Common myeloid progenitor, CD34-positive (primary cell): ENCODE measurements at regions of chr17 and their contacts with region 1.

Region 1: GRCh38 chr17:21098934-21099689 is 27.7 kb upstream of the DHRS7B start:
- DNase-seq: peak; percentile 76 to 87 (median 85)
- H3K4me3 ChIP-seq: peak overlapping the region; percentile 40 to 95 (median 87)
- H3K27ac ChIP-seq: peak overlapping the region in 1 of 2 experiments; percentile 73
- H3K4me1 ChIP-seq: peaks cover 7 to 14% (median 10%) of the 10 kb centered on the region in 4 experiments
- H3K27me3 ChIP-seq: no peaks in the 10 kb centered on the region

Region 2: DNA sequence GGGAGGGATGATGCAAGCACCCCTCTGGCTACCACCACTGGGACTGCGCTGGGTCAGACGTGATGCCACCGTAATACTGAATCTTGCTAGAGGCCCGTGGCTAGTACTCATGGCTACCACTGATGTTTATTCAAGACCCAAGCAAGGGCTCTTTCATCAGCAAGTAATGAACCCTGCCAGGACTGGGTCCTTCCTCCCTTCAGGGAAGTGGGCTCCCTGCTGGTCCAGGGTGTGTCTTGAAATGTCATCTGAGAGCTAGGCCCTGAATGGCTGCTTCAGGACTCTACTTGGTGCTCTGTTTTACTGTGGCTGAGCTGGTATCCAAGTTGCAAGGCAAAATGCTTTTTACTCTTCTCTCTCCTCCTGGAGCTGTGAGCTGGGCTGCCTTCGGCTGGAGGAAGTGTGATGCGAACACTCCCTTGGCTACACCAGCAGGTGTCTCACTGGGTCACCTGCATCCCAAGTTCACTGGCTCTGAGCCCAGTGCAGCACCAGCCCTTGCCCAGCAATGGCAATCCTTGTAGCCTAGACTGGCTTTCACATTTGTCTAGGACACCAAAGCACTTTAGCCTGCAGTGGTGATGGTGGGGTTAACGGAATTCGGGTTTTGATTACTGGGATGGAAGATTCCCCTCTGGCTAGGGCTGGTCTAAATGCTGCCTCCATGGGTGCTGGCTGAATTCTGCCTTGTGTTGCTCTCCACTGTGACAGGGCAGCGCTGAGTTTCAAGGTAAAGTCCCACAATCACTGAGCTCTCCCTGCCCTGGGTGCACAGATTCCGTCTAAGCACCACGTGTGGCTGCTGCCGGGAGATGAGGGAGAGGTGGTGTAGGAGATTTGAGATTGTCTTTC is 154.9 kb before region 1 on chr17:
- CTCF ChIA-PET with region 1: no interaction called
- POLR2A ChIA-PET with region 1: no interaction called
- DNase-seq: peak; percentile 31 to 52 (median 46)
- H3K4me3 ChIP-seq: no peak overlapping the region
- H3K27ac ChIP-seq: no peak overlapping the region
- H3K4me1 ChIP-seq: peaks cover 0 to 3% (median 0%) of the 10 kb centered on the region in 4 experiments
- H3K27me3 ChIP-seq: no peaks in the 10 kb centered on the region

Region 3: DNA sequence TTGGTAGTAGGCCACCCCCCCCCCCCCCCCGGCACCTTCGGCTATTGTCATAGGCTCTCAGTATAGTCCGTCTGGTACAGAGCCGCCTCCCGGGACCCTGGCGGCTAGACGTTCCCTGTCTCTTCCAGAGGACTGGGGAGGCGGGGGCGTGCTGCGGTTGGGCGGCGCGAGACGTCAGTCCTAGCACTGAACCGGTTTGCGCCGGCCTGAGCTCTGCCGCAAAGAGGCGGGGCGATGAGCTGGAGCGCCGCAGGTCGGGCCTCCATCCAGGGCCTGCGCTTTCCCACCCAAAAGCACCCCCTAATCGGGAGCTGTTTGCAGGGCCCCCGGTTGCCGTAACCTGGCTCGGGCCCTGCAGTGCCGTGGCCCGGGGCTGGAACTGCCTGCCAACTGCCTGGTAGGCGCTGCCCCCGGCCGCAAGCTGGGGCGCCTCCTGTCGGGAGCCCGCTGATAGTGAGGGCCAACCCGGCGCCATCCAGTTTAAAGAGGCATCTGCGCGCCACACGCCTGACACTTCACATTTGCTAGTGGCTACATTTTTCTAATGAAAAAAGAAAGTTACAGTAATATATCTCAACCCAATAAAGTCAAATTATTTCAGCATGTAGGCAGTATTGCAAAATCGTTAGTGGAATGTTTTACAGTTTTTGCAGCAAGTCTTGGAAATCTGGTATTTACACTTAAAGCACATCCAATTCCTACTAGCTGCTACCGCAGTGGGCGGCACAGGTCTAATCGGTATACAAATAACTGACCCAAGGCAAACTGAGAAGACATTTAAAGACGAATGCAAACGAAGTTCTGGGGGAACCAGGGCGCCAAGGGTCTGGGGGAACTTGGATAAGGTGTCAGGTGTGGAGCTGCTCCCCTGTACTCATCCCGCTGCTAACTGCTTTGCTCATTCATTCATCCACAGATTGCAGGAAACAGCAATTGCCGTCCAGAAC is 55.6 kb before region 1 on chr17:
- CTCF ChIA-PET with region 1: interaction called, 5 read pairs
- POLR2A ChIA-PET with region 1: interaction called, 10 read pairs
- DNase-seq: peak; percentile 99 to 100 (median 99)
- H3K4me3 ChIP-seq: peak overlapping the region; percentile 9 to 75 (median 54)
- H3K27ac ChIP-seq: peak overlapping the region; percentile 50 to 81
- H3K4me1 ChIP-seq: peaks cover 11 to 33% (median 26%) of the 10 kb centered on the region in 4 experiments
- H3K27me3 ChIP-seq: no peaks in the 10 kb centered on the region

Region 4: GRCh38 chr17:21066394-21066793 is 32.7 kb before region 1 on chr17:
- CTCF ChIA-PET with region 1: no interaction called
- POLR2A ChIA-PET with region 1: no interaction called
- DNase-seq: peak; percentile 27 to 88 (median 78)
- H3K4me3 ChIP-seq: no peak overlapping the region
- H3K27ac ChIP-seq: no peak overlapping the region
- H3K4me1 ChIP-seq: peaks cover 0 to 18% (median 13%) of the 10 kb centered on the region in 4 experiments
- H3K27me3 ChIP-seq: no peaks in the 10 kb centered on the region

Region 5: GRCh38 chr17:21119247-21119918 is 20.3 kb after region 1 on chr17:
- CTCF ChIA-PET with region 1: interaction called, 19 read pairs
- POLR2A ChIA-PET with region 1: no interaction called
- DNase-seq: peak; percentile 76 to 87 (median 86)
- H3K4me3 ChIP-seq: peak overlapping the region in 4 of 7 experiments; percentile 35 to 67 (median 52)
- H3K27ac ChIP-seq: no peak overlapping the region
- H3K4me1 ChIP-seq: peaks cover 3 to 24% (median 13%) of the 10 kb centered on the region in 4 experiments
- H3K27me3 ChIP-seq: no peaks in the 10 kb centered on the region